Heart left ventricle (tissue), 16 donors: ENCODE measurements at regions of chr13 and their contacts with region 1.

Region 1: DNA sequence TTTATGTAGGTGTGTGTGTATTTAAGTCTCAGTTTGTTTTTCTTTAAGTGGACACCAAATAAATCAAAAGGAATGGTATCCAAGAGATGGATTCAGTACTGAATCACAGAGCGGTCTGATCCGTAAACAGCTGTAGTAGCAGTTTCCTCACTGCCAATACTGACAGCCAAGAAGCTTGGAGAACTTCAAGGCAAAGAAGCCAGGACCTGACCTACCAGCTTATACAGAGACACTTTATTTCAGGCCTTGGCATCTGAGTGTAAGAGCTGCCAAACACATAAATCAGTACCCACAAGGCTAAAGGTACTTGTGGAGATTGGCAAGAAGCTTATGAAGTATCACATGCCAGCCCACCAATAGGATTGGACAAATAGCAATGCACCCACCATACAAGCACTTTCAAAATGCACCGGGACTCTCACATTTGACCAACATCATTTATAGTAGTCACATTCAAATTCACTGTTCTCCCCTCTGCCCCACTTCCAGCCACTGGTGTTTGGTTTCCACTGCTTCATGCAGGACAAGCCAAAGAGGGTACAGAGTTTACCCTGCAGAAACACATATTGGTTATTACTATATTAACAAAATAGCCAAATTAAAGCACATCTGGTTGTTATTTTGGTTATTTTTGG is 357.9 kb downstream of the KLF12 start:
- DNase-seq: no peak
- ATAC-seq: peak in 3 of 4 donors; percentile 45 to 78 (median 72)
- H3K4me3 ChIP-seq: no peak overlapping the region
- H3K27ac ChIP-seq: peak overlapping the region in 1 of 12 donors; percentile 7
- H3K4me1 ChIP-seq: peaks cover 0 to 12% (median 2%) of the 10 kb centered on the region in 12 donors
- H3K27me3 ChIP-seq: no peaks in the 10 kb centered on the region
- CTCF ChIP-seq: no peak
- POLR2A ChIP-seq: no peak

Region 2: GRCh38 chr13:73792796-73793195 is 16.5 kb after region 1 on chr13:
- intact Hi-C with region 1: no loop called
- DNase-seq: no peak
- ATAC-seq: no peak
- H3K4me3 ChIP-seq: no peak overlapping the region
- H3K27ac ChIP-seq: no peak overlapping the region
- H3K4me1 ChIP-seq: no peaks in the 10 kb centered on the region
- H3K27me3 ChIP-seq: no peaks in the 10 kb centered on the region
- CTCF ChIP-seq: no peak
- POLR2A ChIP-seq: no peak

Region 3: GRCh38 chr13:73820688-73821087 is 44.4 kb after region 1 on chr13:
- intact Hi-C with region 1: loop called in 1 of 10 experiments (anchors 10 kb)
- DNase-seq: no peak
- ATAC-seq: no peak
- H3K4me3 ChIP-seq: no peak overlapping the region
- H3K27ac ChIP-seq: no peak overlapping the region
- H3K4me1 ChIP-seq: peaks cover 0 to 7% (median 0%) of the 10 kb centered on the region in 12 donors
- H3K27me3 ChIP-seq: no peaks in the 10 kb centered on the region
- CTCF ChIP-seq: no peak
- POLR2A ChIP-seq: no peak

Region 4: GRCh38 chr13:73898276-73898675 is 122.0 kb after region 1 on chr13:
- intact Hi-C with region 1: no loop called
- DNase-seq: no peak
- ATAC-seq: no peak
- H3K4me3 ChIP-seq: no peak overlapping the region
- H3K27ac ChIP-seq: no peak overlapping the region
- H3K4me1 ChIP-seq: peaks cover 0 to 14% (median 0%) of the 10 kb centered on the region in 12 donors
- H3K27me3 ChIP-seq: no peaks in the 10 kb centered on the region
- CTCF ChIP-seq: no peak
- POLR2A ChIP-seq: no peak

Region 5: DNA sequence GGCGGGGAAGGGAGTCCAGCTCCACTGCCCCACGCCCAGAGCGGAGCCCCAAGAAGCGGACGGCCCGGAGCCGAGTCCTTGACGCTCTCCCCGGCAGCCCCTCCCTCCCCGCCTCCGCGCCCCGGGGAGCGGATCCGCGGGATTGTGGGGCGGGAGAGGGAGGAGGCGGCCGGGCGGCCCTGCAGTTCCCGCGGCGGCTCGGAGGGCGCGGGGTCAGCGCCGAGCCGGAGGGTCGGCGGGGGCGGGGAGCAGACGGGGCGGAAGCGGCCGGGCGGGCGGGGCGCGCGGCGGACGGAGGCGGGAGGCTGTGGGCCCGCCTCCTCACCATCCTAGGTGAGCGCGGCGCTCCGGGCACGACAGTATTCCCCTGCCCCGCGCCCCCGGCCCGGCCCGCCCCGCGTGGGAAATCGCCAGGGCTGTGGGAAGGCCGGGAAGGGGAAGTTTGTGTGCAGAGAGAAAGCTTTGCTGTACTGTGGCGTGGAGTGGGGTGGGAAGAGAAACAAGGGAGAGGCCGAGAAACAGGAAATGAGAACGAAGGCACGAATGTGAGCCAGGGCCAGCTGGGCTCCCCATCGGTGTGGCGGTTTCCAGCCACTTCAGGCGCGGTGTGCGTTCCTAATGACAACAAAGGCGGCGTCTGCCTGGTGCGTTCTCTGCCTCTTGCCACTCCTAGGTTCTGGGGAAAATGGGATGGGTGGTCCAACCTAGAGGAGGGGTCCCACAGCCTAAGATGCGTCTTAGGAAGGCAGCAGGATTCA is 359.2 kb after region 1 on chr13:
- intact Hi-C with region 1: no loop called
- DNase-seq: peak; percentile 78 to 87 (median 86)
- ATAC-seq: peak; percentile 3 to 69 (median 52)
- H3K4me3 ChIP-seq: peak overlapping the region; percentile 69 to 97 (median 89)
- H3K27ac ChIP-seq: peak overlapping the region; percentile 92 to 99 (median 98)
- H3K4me1 ChIP-seq: peaks cover 0 to 25% (median 19%) of the 10 kb centered on the region in 12 donors
- H3K27me3 ChIP-seq: peaks cover 0 to 4% (median 0%) of the 10 kb centered on the region in 9 donors
- CTCF ChIP-seq: no peak
- POLR2A ChIP-seq: no peak